Mucosa of descending colon (tissue), 3 donors: ENCODE measurements at regions of chr3 and their contacts with region 1.

Region 1: DNA sequence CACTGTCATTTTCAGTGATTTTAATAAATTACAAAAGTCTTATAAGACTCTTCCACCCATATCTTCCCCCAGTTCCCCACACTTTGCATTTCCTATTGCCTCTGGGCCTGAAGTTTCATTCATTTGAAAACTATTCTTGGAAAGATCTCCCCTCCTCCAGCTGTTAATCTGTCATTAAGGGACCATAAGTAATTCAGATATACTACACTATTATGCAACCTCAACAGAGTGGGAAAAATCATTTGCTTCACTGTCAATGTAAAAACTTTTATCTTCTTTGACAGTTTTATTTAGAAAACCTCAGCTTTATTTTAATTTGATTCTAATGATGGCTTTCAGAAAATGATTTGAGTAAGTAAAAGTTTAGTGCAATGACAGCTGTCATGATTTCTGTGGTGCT is 435.4 kb upstream of the KCNMB2 start:
- DNase-seq: no peak
- ATAC-seq: no peak
- H3K4me3 ChIP-seq: no peak overlapping the region
- H3K4me1 ChIP-seq: no peaks in the 10 kb centered on the region
- CTCF ChIP-seq: no peak

Region 2: GRCh38 chr3:178275793-178276192 is 174.9 kb after region 1 on chr3:
- intact Hi-C with region 1: loop called in 1 of 2 experiments (anchors 5 kb)
- DNase-seq: no peak
- ATAC-seq: no peak
- H3K4me3 ChIP-seq: no peak overlapping the region
- H3K4me1 ChIP-seq: no peaks in the 10 kb centered on the region
- CTCF ChIP-seq: no peak